A673 (cell line): ENCODE measurements at regions of chr2 and their contacts with region 1.

Region 1: GRCh38 chr2:165015052-165015642 is 59.8 kb upstream of the SLC38A11 start:
- DNase-seq: peak; percentile 77
- H3K4me3 ChIP-seq: no peak overlapping the region
- H3K27ac ChIP-seq: no peak overlapping the region
- H3K4me1 ChIP-seq: no peaks in the 10 kb centered on the region
- H3K27me3 ChIP-seq: no peaks in the 10 kb centered on the region
- CTCF ChIP-seq: peak; percentile 98

Region 2: DNA sequence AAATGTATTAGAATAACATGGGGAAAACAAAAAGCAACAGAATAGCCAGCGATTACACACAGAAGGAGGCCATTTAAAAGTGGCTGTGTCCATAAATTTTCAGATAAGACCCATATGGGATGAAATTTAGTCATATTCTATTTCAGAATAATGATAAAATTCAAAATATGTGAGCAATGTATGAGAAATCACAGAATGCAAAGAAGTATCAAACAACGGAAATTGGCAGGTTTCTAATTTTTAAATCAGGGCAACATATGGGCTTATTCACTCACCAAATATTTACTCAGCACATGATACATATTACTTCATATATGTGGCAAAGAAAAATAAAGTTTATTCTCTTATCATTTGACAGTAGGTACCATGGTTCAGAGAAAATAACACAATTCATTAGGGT is 602.3 kb before region 1 on chr2:
- CTCF ChIA-PET with region 1: no interaction called
- POLR2A ChIA-PET with region 1: no interaction called
- intact Hi-C with region 1: no loop called
- DNase-seq: no peak
- H3K4me3 ChIP-seq: no peak overlapping the region
- H3K27ac ChIP-seq: no peak overlapping the region
- H3K4me1 ChIP-seq: no peaks in the 10 kb centered on the region
- H3K27me3 ChIP-seq: peaks cover 2% of the 10 kb centered on the region
- CTCF ChIP-seq: no peak

Region 3: GRCh38 chr2:164671664-164672396 is 343.3 kb before region 1 on chr2:
- CTCF ChIA-PET with region 1: no interaction called
- POLR2A ChIA-PET with region 1: no interaction called
- intact Hi-C with region 1: no loop called
- DNase-seq: no peak
- H3K4me3 ChIP-seq: no peak overlapping the region
- H3K27ac ChIP-seq: no peak overlapping the region
- H3K4me1 ChIP-seq: no peaks in the 10 kb centered on the region
- H3K27me3 ChIP-seq: no peaks in the 10 kb centered on the region
- CTCF ChIP-seq: no peak

Region 4: DNA sequence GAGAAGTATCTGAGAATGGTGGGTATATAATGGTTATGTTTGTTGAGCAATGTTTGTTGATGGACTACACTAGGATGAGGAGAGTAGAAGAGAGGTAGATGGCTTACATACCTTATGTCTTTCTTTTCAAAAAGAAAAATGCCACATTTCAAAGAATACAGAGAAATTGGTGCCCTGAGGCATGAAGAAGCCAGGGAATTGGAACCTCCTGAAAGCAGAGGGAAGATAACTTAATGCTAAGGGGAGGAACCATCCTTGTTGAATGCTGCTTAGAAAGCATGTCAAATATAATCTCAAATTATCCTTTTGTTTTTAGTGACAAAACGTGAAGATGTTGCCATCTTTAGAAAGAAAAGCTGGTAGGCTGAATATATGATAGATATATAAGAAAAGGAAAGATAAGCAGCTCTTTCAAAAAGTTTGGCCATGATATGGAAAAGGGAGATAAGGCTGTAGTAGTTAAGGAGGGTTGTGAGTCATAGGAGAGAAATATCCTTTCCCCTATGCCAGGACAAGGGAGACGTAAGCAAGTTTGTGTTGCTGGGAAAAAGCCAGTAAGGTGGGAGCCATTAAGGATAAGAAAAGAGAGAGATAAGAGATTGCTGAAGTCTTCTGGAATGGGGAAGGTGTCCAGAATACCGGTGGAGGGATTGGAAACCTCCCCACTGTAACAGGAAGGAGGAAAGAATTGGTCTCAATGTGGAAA is 290.4 kb after region 1 on chr2:
- CTCF ChIA-PET with region 1: no interaction called
- POLR2A ChIA-PET with region 1: no interaction called
- intact Hi-C with region 1: loop called (anchors 5 kb)
- DNase-seq: no peak
- H3K4me3 ChIP-seq: no peak overlapping the region
- H3K27ac ChIP-seq: no peak overlapping the region
- H3K4me1 ChIP-seq: no peaks in the 10 kb centered on the region
- H3K27me3 ChIP-seq: no peaks in the 10 kb centered on the region
- CTCF ChIP-seq: no peak

Region 5: DNA sequence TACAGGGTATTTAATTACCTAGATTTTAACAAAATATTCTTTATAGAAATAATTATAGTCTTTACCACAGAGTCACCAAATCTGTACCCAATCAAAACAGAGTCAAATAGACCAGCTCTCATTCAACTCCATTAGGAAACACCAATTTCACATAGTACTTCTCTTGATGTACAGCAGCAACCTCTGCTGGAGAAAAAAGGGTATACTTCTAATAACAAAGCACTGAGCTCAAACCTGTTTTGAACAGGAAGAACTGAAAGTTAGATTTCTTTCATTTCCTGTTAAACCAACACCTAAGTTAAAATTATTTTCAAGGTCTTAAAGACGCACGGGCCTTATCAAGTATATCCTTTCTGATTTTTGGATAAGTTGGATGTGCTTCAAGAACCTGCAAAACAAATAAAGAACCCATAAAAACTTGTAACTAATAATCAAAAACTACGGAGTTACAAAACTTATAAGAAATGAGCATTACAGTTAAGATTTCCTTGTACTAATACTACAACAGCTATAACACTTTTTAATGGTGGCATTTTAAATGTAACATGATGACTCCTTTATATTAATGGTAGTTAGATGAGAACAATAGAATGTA is 859.4 kb after region 1 on chr2:
- CTCF ChIA-PET with region 1: interaction called, 17 read pairs
- POLR2A ChIA-PET with region 1: no interaction called
- intact Hi-C with region 1: loop called (anchors 10 kb)
- DNase-seq: peak; percentile 85
- H3K4me3 ChIP-seq: no peak overlapping the region
- H3K27ac ChIP-seq: no peak overlapping the region
- H3K4me1 ChIP-seq: no peaks in the 10 kb centered on the region
- H3K27me3 ChIP-seq: no peaks in the 10 kb centered on the region
- CTCF ChIP-seq: peak; percentile 76